B cell (primary cell): ENCODE measurements at regions of chr1 and their contacts with region 1.

Region 1: DNA sequence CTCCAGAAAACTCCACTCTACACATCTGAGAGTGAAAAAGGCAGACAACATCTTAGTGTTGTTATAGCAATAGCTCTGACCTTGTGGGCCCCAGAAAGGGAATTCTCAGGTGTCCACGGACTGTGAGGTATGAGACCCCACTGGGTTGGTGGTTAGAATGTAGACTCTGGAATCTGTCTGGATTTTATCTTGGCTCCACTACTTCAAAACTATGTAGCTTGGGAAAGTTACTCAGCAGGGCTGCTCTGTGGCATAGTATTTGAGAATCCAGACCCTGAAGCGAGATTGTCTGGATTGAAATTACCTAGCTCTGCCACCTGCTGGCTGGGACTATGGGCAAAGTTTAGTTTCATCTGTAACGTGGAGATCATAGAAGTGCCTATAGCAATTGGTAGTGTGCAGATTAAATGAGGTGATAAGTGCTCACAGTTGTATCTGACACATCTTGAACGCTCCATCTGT is 25.8 kb downstream of the PRDM2 start:
- DNase-seq: peak; percentile 84
- ATAC-seq: peak; percentile 35
- H3K4me3 ChIP-seq: no peak overlapping the region
- H3K4me3 Mint-ChIP-seq: peak overlapping the region; percentile 75
- H3K27ac ChIP-seq: peak overlapping the region; percentile 62 to 98
- H3K27ac Mint-ChIP-seq: peak overlapping the region; percentile 88
- H3K4me1 ChIP-seq: peaks cover 68 to 74% of the 10 kb centered on the region in 2 donors
- H3K4me1 Mint-ChIP-seq: peaks cover 90% of the 10 kb centered on the region
- H3K27me3 ChIP-seq: no peaks in the 10 kb centered on the region
- H3K27me3 Mint-ChIP-seq: no peaks in the 10 kb centered on the region
- CTCF ChIP-seq: peak; percentile 85

Region 2: DNA sequence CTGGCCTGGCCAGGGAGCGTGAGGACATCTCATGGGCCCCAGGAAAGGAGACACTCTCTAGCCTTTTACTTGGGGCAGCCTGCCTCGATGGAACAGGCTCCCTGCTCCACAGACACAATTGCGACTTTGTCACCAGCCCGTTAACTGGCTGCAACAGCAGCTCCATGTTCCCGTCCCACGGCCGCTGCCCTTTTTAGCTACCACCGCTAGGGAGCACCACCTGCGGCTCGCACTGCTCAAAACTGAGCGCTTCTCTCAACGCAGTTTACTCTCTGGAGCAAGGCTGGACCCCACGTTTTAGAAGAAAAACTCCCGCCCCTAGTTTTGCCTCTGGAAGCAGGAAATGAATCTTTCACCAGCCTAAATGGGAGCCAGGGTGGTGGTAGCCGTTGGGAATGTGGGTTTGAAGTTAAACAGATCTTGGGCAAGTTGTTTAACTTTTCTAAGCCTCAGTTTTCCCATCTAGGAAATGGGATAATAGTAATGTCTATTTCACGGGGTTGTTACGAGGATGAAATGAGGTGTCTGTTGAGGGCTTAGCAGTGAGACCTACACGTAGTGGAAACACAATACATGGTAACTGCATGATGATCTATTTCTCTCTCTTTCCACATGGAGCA is 208.4 kb before region 1 on chr1:
- CTCF ChIA-PET with region 1: no interaction called
- POLR2A ChIA-PET with region 1: no interaction called
- intact Hi-C with region 1: loop called (anchors 5 kb)
- DNase-seq: peak; percentile 17
- ATAC-seq: no peak
- H3K4me3 ChIP-seq: no peak overlapping the region
- H3K4me3 Mint-ChIP-seq: no peak overlapping the region
- H3K27ac ChIP-seq: no peak overlapping the region
- H3K27ac Mint-ChIP-seq: no peak overlapping the region
- H3K4me1 ChIP-seq: no peaks in the 10 kb centered on the region
- H3K4me1 Mint-ChIP-seq: peaks cover under 1% of the 10 kb centered on the region
- H3K27me3 ChIP-seq: peaks cover 0 to 23% (median 0%) of the 10 kb centered on the region in 4 experiments
- H3K27me3 Mint-ChIP-seq: peaks cover 55% of the 10 kb centered on the region
- CTCF ChIP-seq: peak; percentile 45

Region 3: DNA sequence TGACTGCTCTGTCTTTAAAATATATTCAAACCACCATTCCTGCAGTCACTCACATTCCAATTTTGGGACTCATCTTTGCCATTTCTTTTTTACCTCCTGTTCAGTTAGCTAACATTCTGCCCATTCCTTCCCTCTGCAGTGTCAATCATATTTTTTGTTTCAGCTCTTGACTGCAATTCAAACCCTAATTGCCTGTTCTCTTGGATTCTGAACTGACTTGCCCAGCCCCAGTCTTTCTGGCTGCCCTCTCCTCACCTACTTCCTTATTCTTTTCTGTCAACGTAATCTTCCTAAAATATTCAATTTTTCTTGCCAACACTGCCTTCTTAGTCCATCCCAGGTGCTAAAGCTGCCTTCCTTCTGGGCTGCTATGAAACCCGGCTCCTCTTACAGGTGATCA is 19.7 kb before region 1 on chr1:
- CTCF ChIA-PET with region 1: interaction called, 339 read pairs
- POLR2A ChIA-PET with region 1: interaction called, 84 read pairs
- intact Hi-C with region 1: loop called (anchors 1 kb)
- DNase-seq: no peak
- ATAC-seq: no peak
- H3K4me3 ChIP-seq: no peak overlapping the region
- H3K4me3 Mint-ChIP-seq: peak overlapping the region; percentile 74
- H3K27ac ChIP-seq: peak overlapping the region in 1 of 2 donors; percentile 37
- H3K27ac Mint-ChIP-seq: peak overlapping the region; percentile 85
- H3K4me1 ChIP-seq: peaks cover 62 to 86% of the 10 kb centered on the region in 2 donors
- H3K4me1 Mint-ChIP-seq: peaks cover 84% of the 10 kb centered on the region
- H3K27me3 ChIP-seq: no peaks in the 10 kb centered on the region
- H3K27me3 Mint-ChIP-seq: no peaks in the 10 kb centered on the region
- CTCF ChIP-seq: no peak

Region 4: DNA sequence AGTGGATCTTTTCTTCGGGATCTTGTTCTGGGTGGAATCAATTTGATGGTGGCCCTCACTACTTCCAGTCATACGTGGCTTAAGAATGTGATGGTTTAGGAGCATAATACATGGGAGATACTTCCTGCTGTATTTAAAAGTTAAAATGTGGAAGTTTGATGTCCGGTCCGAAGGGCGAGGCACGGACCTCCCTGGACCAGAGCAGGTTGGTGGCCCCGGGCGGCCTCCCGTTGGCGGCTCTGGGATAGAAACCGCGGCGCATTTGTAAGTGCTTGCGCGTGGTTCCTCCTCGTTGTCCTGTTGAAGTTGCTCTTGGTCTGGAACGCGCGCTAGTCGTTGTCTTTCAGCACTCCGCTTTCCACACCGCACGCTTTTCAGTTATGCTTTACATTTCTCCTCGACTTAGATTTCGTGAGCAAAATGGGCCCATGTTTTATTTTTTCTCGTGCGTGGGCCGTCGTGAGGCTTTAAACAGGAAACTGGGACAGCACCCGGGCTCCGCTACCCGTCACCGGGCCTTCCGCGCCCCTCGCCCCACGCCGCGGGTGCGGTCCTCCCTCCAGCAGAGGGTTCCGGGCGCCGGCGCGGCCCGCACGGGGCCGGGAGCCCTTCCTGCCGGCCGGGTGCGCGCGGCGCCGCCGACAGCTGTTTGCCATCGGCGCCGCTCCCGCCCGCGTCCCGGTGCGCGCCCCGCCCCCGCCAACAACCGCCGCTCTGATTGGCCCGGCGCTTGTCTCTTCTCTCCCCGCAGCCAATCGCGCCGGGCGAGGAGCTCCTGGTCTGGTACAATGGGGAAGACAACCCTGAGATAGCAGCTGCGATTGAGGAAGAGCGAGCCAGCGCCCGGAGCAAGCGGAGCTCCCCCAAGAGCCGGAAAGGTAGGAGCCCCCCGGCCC is 23.1 kb after region 1 on chr1:
- CTCF ChIA-PET with region 1: interaction called, 48 read pairs
- POLR2A ChIA-PET with region 1: interaction called, 17 read pairs
- intact Hi-C with region 1: no loop called
- DNase-seq: peak; percentile 97
- ATAC-seq: peak; percentile 90
- H3K4me3 ChIP-seq: peak overlapping the region; percentile 59 to 81 (median 72)
- H3K4me3 Mint-ChIP-seq: peak overlapping the region; percentile 95
- H3K27ac ChIP-seq: peak overlapping the region; percentile 86 to 90
- H3K27ac Mint-ChIP-seq: peak overlapping the region; percentile 98
- H3K4me1 ChIP-seq: peaks cover 38 to 42% of the 10 kb centered on the region in 2 donors
- H3K4me1 Mint-ChIP-seq: peaks cover 59% of the 10 kb centered on the region
- H3K27me3 ChIP-seq: no peaks in the 10 kb centered on the region
- H3K27me3 Mint-ChIP-seq: no peaks in the 10 kb centered on the region
- CTCF ChIP-seq: peak; percentile 23

Region 5: GRCh38 chr1:13764588-13765332 is 39.0 kb after region 1 on chr1:
- CTCF ChIA-PET with region 1: interaction called, 8 read pairs
- POLR2A ChIA-PET with region 1: no interaction called
- intact Hi-C with region 1: loop called (anchors 5 kb)
- DNase-seq: peak; percentile 36
- ATAC-seq: no peak
- H3K4me3 ChIP-seq: no peak overlapping the region
- H3K4me3 Mint-ChIP-seq: peak overlapping the region; percentile 19
- H3K27ac ChIP-seq: peak overlapping the region; percentile 26 to 66
- H3K27ac Mint-ChIP-seq: peak overlapping the region; percentile 22
- H3K4me1 ChIP-seq: peaks cover 44 to 62% of the 10 kb centered on the region in 2 donors
- H3K4me1 Mint-ChIP-seq: peaks cover 86% of the 10 kb centered on the region
- H3K27me3 ChIP-seq: no peaks in the 10 kb centered on the region
- H3K27me3 Mint-ChIP-seq: no peaks in the 10 kb centered on the region
- CTCF ChIP-seq: no peak

Region 6: DNA sequence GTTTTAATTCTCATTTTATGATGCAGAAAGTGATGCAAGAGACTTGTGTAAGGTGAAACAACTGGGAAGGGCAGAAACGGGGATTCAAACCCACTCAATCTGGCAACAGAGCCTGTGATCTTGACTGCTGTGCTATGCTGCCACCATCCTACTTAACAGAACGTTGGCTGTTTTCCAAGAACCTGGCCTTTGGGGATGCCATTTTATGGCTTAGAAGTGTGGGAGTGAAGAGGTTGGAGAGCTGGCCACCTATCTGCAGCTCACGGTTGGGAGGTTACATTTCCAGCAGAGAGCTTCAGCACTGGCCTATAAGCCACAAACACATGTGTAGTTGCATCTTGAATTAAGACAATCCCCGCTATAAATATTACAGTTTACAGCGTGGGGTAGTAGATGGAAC is 209.6 kb after region 1 on chr1:
- CTCF ChIA-PET with region 1: no interaction called
- POLR2A ChIA-PET with region 1: no interaction called
- intact Hi-C with region 1: no loop called
- DNase-seq: no peak
- ATAC-seq: no peak
- H3K4me3 ChIP-seq: no peak overlapping the region
- H3K4me3 Mint-ChIP-seq: no peak overlapping the region
- H3K27ac ChIP-seq: no peak overlapping the region
- H3K27ac Mint-ChIP-seq: no peak overlapping the region
- H3K4me1 ChIP-seq: no peaks in the 10 kb centered on the region
- H3K4me1 Mint-ChIP-seq: no peaks in the 10 kb centered on the region
- H3K27me3 ChIP-seq: peaks cover 0 to 9% (median 3%) of the 10 kb centered on the region in 4 experiments
- H3K27me3 Mint-ChIP-seq: peaks cover 41% of the 10 kb centered on the region
- CTCF ChIP-seq: no peak

Region 7: GRCh38 chr1:14215151-14215550 is 489.4 kb after region 1 on chr1:
- CTCF ChIA-PET with region 1: no interaction called
- POLR2A ChIA-PET with region 1: no interaction called
- intact Hi-C with region 1: no loop called
- DNase-seq: no peak
- ATAC-seq: no peak
- H3K4me3 ChIP-seq: no peak overlapping the region
- H3K4me3 Mint-ChIP-seq: no peak overlapping the region
- H3K27ac ChIP-seq: no peak overlapping the region
- H3K27ac Mint-ChIP-seq: no peak overlapping the region
- H3K4me1 ChIP-seq: no peaks in the 10 kb centered on the region
- H3K4me1 Mint-ChIP-seq: no peaks in the 10 kb centered on the region
- H3K27me3 ChIP-seq: no peaks in the 10 kb centered on the region
- H3K27me3 Mint-ChIP-seq: peaks cover 8% of the 10 kb centered on the region
- CTCF ChIP-seq: no peak